ENCODE measurements at regions of chr11 and their contacts with region 1.

Region 1: DNA sequence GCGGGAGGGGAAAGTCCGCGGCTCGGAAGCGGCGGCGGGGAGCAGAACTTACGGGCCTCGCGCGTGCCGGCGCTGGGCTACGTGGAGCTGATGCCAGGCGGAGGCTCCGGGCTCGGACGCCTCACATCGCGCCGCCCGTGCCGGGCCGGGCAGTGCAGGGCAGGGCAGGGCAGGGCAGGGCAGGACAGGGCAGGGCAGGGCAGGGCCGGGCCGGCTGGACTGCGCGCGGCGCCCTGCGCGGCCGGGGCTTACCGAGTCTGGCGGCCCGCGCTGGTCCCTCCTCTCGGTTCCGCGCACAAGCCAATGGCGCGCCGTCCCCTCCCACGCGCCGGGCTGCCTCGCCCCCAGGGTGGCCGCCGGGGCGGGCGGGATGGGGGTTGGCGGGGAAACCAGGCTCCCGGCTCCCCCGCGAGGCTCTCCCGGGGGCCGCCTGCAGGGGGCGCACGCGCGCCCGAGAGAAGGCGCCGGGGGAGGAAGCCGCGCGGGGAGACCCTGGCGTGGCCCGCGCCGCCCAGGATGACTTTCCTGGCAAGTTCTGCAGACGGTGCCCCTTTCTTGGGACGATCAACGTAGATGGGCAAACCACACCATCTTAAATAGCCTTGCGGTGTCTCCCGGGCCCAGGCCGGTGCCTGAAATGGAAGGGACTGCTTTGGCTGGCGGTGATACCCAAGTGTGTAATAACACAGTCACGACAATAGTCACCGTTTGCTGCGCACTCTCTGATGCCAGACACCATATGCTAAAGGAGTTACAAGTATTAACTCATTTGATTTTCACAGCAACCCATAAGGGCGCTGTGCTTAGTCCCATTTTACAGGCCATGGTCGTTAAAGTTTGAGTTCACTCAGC is at the start of gene TP53I11:
- DNase-seq: peak; percentile 66
- H3K4me3 Mint-ChIP-seq: peak within 1 kb of the TSS; percentile 67
- H3K27ac Mint-ChIP-seq: no peak within 1 kb of the TSS
- H3K4me1 Mint-ChIP-seq: peaks cover 15% of the 10 kb centered on the region
- H3K27me3 Mint-ChIP-seq: peaks cover 20% of the 10 kb centered on the region
- CTCF ChIP-seq: peak; percentile 91
- total RNA-seq, gene TP53I11: 27.8 and 69.5 TPM in 2 replicates

Region 2: DNA sequence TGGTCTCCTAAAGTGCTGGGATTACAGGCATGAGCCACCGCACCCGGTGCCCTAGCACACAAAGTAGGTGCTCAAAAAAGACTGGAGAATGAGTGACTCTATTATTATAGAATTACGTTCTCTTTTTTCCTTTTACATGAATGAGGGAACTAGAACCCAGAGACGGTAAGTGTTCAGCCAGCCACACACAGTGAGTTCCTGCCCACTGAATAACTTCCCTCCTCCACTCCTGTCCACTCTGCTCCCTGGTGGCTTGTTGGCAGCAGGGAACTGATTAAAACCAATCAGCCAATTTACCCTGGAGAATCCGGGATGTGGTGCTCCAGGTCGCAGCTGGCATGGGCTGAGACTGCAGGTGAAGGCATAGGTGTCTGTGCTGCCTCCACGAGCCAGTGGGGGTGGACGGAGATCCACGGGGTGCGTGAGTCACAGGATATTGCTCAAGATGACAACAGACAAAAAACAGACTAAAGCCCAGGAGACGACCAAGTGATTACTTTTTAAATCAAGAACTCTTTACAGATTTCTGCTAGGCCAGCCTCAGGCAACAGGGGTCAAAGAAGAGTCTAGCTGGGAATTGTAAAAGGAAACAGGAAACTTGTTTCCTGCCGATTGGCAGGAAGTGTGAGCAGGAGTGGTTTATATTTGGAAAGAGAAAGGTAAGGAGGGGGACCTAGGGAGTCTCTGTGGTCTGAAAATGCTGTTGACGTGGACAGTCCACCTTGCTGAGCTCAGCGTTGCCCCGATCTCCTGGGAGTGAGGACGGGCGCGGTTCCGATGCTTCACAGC is 95.0 kb after region 1 on chr11:
- CTCF ChIA-PET with region 1: no interaction called
- intact Hi-C with region 1: loop called (anchors 10 kb)
- DNase-seq: peak; percentile 32
- H3K4me3 Mint-ChIP-seq: no peak overlapping the region
- H3K27ac Mint-ChIP-seq: no peak overlapping the region
- H3K4me1 Mint-ChIP-seq: peaks cover 11% of the 10 kb centered on the region
- H3K27me3 Mint-ChIP-seq: peaks cover 57% of the 10 kb centered on the region
- CTCF ChIP-seq: no peak